CD8-positive, alpha-beta T cell (primary cell): ENCODE measurements at regions of chr20 and their contacts with region 1.

Region 1: DNA sequence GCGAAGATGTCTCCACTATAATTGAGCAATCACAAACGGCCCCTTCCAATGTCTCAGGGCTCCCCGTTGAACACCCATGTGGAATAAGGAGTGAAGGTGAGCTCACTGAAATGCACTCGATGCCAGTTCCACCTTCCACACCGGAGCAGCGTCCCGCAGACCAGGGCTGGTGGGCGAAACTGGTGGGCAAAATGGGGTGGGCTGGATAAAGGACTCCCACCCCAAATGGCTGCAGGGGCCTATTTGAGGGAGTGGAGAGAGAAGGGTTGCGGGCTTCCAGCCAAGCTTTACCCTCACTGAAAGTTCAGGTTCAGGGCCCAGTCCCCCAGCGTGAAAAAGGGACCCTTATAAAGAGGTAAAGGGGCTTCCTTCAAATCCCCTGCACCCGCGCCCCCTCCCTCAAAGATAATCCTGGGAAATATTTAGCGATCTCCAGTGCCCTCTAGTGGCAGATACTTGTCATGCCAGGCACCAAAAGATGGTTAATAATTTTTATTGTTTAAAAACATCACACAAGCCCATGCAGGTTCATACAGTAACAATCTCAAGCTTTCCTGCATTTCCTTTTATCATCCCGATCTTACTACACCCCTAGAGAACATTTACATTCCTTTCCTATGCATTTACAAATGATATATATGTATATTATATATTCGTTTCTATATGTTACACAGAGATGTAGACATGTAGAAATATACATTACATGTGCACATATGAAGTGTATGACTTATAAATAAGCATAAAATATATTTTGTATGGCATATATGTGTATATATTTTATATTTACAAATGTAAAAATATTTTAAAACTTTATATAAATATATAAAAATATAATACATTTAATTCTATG is 58.2 kb upstream of the NKX2-2 start:
- DNase-seq: peak in 4 of 9 experiments; percentile 16 to 49 (median 34)
- ATAC-seq: no peak
- H3K4me3 ChIP-seq: no peak overlapping the region
- H3K4me3 Mint-ChIP-seq: no peak overlapping the region
- H3K27ac ChIP-seq: no peak overlapping the region
- H3K27ac Mint-ChIP-seq: no peak overlapping the region
- H3K4me1 ChIP-seq: peaks cover 4% of the 10 kb centered on the region
- H3K4me1 Mint-ChIP-seq: no peaks in the 10 kb centered on the region
- H3K27me3 ChIP-seq: peaks cover 0 to 2% of the 10 kb centered on the region in 2 experiments
- H3K27me3 Mint-ChIP-seq: peaks cover 19% of the 10 kb centered on the region
- CTCF ChIP-seq: peak; percentile 86

Region 2: DNA sequence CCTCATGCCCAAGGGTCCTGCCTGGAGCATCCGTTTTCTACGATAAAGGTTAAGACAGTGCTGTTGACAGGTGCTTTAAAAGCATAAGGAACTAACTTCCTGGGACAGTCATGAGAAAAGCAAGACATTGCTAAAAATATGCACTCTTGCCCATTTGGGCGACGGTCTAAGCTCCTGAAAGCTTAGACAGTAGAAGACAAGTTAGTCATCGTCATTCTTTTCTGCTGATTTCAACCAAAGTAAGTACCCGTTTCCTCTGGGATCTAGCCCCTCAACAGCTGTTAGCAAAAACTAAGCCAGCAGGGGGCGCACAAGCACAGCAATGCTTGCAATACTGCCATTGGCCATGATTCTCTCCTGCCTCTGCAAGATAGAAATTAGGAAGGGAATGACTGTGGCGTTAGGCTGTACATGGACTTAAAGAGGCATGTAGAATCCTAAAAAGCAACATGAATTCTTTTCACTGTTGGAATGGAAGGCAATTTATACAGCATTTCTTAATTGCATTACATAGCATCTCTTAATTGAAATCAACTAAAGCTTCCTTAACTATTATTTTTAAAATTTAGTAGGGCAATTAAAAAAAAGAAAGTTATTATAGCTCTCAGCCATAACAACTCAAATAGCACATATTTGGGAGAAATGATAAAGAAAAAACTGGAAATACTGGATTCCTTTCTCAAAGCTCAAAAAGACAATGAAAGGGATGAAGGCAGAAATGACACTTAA is 711.8 kb before region 1 on chr20:
- CTCF ChIA-PET with region 1: interaction called, 9 read pairs
- POLR2A ChIA-PET with region 1: no interaction called
- intact Hi-C with region 1: loop called (anchors 1 to 2 kb)
- DNase-seq: peak; percentile 64 to 90 (median 77)
- ATAC-seq: peak; percentile 58
- H3K4me3 ChIP-seq: no peak overlapping the region
- H3K4me3 Mint-ChIP-seq: no peak overlapping the region
- H3K27ac ChIP-seq: no peak overlapping the region
- H3K27ac Mint-ChIP-seq: no peak overlapping the region
- H3K4me1 ChIP-seq: no peaks in the 10 kb centered on the region
- H3K4me1 Mint-ChIP-seq: no peaks in the 10 kb centered on the region
- H3K27me3 ChIP-seq: peaks cover 0 to 3% of the 10 kb centered on the region in 2 experiments
- H3K27me3 Mint-ChIP-seq: peaks cover 22% of the 10 kb centered on the region
- CTCF ChIP-seq: peak; percentile 82

Region 3: GRCh38 chr20:21529863-21530262 is 42.2 kb before region 1 on chr20:
- CTCF ChIA-PET with region 1: interaction called, 33 read pairs
- POLR2A ChIA-PET with region 1: no interaction called
- intact Hi-C with region 1: loop called (anchors 1 kb)
- DNase-seq: peak in 1 of 9 experiments; percentile 36
- ATAC-seq: no peak
- H3K4me3 ChIP-seq: no peak overlapping the region
- H3K4me3 Mint-ChIP-seq: no peak overlapping the region
- H3K27ac ChIP-seq: no peak overlapping the region
- H3K27ac Mint-ChIP-seq: no peak overlapping the region
- H3K4me1 ChIP-seq: no peaks in the 10 kb centered on the region
- H3K4me1 Mint-ChIP-seq: no peaks in the 10 kb centered on the region
- H3K27me3 ChIP-seq: peaks cover 3 to 4% of the 10 kb centered on the region in 2 experiments
- H3K27me3 Mint-ChIP-seq: peaks cover 23% of the 10 kb centered on the region
- CTCF ChIP-seq: peak; percentile 44

Region 4: DNA sequence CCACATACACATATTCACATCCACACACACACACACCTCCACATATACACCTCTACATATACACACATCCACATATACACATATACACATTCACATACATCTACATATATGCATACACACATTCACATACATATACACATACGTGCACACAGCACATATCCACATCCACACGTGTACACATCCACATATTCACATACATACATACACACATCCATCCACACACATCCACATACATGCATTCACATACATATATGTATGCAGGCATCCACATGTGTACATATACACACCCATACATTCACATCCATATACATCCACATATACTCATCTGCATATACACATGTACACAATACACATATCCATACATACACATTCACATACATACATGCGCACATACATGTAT is 32.6 kb before region 1 on chr20:
- CTCF ChIA-PET with region 1: interaction called, 14 read pairs
- POLR2A ChIA-PET with region 1: no interaction called
- intact Hi-C with region 1: no loop called
- DNase-seq: no peak
- ATAC-seq: no peak
- H3K4me3 ChIP-seq: no peak overlapping the region
- H3K4me3 Mint-ChIP-seq: no peak overlapping the region
- H3K27ac ChIP-seq: no peak overlapping the region
- H3K27ac Mint-ChIP-seq: no peak overlapping the region
- H3K4me1 ChIP-seq: no peaks in the 10 kb centered on the region
- H3K4me1 Mint-ChIP-seq: no peaks in the 10 kb centered on the region
- H3K27me3 ChIP-seq: no peaks in the 10 kb centered on the region
- H3K27me3 Mint-ChIP-seq: peaks cover 19% of the 10 kb centered on the region
- CTCF ChIP-seq: no peak

Region 5: DNA sequence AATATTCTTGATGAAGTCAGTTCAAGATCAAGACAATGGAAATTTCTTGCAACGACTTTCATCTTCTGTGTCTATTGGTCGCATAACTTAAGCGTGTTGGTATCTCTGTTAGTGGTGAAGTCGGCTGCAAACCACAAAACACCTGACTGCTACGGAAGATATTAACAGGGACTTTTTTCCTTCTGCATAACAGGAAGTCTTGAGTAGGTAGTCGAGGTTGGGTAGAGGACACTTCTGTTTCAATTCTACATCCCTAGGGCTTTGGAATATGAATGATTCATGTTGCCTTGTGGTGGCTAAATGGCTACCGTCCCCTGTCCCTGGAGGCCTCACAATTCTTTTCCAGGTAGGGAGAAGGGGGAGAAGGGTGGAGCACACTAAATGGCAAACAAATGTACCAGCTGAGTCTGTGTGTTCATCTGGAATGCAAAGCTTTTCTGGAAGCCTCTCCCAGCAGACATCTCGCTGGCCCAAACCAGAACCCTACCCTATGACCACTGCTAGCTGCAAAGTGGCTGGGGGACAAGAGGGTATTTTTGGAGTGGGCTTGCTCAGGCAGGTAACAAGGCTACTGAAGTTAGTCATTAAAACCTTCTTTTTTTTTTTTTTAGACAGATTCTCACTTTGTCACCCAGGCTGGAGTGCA is 23.6 kb before region 1 on chr20:
- CTCF ChIA-PET with region 1: interaction called, 12 read pairs
- POLR2A ChIA-PET with region 1: no interaction called
- intact Hi-C with region 1: no loop called
- DNase-seq: peak in 7 of 9 experiments; percentile 18 to 83 (median 41)
- ATAC-seq: peak; percentile 86
- H3K4me3 ChIP-seq: no peak overlapping the region
- H3K4me3 Mint-ChIP-seq: peak overlapping the region; percentile 66
- H3K27ac ChIP-seq: peak overlapping the region; percentile 43 to 44
- H3K27ac Mint-ChIP-seq: peak overlapping the region; percentile 69
- H3K4me1 ChIP-seq: peaks cover 33% of the 10 kb centered on the region
- H3K4me1 Mint-ChIP-seq: peaks cover 15% of the 10 kb centered on the region
- H3K27me3 ChIP-seq: no peaks in the 10 kb centered on the region
- H3K27me3 Mint-ChIP-seq: peaks cover 4% of the 10 kb centered on the region
- CTCF ChIP-seq: no peak

Region 6: DNA sequence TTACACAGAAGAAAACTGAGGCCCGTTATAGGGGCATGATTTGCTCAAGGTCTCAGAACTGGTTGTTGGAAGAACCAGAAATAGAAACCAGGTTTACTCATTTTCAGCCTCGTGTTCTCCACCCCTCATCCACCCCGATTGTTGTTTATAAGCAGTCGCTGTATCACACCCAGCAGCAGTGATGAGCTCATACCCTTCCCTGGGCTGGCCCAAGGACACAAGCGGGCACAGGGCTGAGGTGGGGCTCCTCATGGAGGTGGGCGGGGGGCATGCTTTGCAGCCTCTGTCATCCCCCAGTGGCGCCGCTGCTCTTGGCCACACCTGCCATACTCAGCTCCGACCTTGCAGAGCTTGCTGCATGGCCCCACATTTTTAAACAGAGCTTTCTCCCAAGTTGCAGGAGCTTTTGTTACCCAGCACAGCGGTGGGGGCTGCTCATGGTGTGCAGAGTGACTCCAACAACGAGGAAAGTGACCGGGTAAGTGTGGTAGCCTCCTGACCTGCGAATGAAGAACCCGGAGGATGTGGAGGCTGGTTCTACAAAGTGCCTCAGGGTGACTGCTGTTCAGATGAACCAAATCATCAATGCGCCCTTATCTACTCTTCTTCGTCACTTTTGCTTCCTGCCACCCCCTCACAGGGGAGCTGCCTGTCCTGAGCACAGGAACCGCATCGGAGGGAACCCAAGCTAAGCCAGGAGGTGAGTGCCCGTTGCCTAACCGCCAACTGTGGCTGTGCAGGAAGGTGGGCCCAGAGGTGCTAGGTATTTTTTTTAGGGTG is 14.6 kb before region 1 on chr20:
- CTCF ChIA-PET with region 1: interaction called, 23 read pairs
- POLR2A ChIA-PET with region 1: interaction called, 3 read pairs
- intact Hi-C with region 1: no loop called
- DNase-seq: peak in 4 of 9 experiments; percentile 9 to 46 (median 10)
- ATAC-seq: peak; percentile 26
- H3K4me3 ChIP-seq: no peak overlapping the region
- H3K4me3 Mint-ChIP-seq: no peak overlapping the region
- H3K27ac ChIP-seq: no peak overlapping the region
- H3K27ac Mint-ChIP-seq: no peak overlapping the region
- H3K4me1 ChIP-seq: peaks cover 9% of the 10 kb centered on the region
- H3K4me1 Mint-ChIP-seq: peaks cover 11% of the 10 kb centered on the region
- H3K27me3 ChIP-seq: no peaks in the 10 kb centered on the region
- H3K27me3 Mint-ChIP-seq: peaks cover 11% of the 10 kb centered on the region
- CTCF ChIP-seq: no peak

Region 7: DNA sequence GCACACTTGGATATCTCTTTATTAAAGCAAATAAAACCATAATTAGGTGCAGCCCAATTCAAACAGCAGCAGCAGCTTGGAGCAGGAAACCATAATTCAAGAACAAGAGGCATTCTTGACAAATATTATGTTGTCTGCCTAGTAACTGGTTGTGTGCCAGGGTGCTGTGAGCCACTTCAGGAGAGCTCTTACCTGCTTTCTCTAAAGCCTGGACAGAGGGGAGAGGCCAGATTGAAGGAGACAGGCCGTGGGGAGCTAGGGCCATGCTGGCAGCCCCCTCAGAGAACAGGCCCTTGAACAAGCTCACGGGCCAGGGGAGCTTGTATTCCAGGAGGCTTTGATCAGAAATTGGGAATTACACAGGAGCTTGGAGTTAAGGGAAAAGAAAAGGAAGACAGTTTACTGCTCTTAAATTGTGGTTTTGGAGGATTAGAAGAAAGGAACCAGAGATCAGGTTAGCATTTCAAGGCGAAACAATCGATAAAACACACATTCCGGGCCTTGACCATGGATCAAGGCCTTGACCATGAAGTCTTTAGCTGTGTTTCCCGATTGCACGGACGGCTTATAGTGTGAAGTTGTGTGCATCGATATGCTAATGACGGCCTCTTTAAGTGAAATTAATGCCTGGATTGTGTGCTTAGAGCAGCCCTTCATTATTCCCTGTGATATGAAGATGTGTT is 11.6 kb after region 1 on chr20:
- CTCF ChIA-PET with region 1: interaction called, 10 read pairs
- POLR2A ChIA-PET with region 1: no interaction called
- intact Hi-C with region 1: no loop called
- DNase-seq: no peak
- ATAC-seq: no peak
- H3K4me3 ChIP-seq: no peak overlapping the region
- H3K4me3 Mint-ChIP-seq: no peak overlapping the region
- H3K27ac ChIP-seq: no peak overlapping the region
- H3K27ac Mint-ChIP-seq: no peak overlapping the region
- H3K4me1 ChIP-seq: no peaks in the 10 kb centered on the region
- H3K4me1 Mint-ChIP-seq: no peaks in the 10 kb centered on the region
- H3K27me3 ChIP-seq: no peaks in the 10 kb centered on the region
- H3K27me3 Mint-ChIP-seq: peaks cover 36% of the 10 kb centered on the region
- CTCF ChIP-seq: no peak